HEK293T (cell line): ENCODE measurements at regions of chr6 and their contacts with region 1.

Region 1: DNA sequence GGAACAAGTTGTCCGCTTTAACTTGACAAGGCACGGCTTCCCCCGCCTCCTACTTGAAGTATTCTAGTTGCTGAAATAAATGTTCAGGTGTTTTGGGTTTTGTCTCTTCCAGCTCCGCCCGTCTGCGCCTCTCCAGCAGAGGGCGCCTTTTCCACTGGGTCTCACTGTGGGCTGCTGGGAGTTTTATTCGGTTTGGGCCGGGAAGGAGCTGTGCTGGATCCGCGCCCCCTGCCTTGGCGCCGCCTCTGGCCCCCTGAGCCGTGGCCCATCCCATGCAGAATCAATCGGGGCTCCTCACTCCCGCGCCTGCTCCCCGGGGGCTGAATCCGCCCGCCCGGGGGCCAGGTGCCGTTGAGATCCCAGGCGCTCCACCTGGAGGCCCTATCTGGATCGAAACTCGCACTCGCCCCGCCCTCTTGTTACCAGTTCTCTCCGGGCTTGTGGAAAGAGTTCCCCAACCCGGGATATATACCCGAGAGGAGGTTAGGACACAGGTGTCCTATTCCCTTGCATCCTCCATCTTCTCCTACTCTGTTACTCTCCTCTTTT is 51.0 kb upstream of the TCF21 start:
- DNase-seq: peak; percentile 85

Region 2: GRCh38 chr6:133568970-133569889 is 268.6 kb before region 1 on chr6:
- CTCF ChIA-PET with region 1: interaction called, 14 read pairs
- POLR2A ChIA-PET with region 1: no interaction called
- DNase-seq: peak; percentile 69

Region 3: GRCh38 chr6:133895573-133896343 is 57.9 kb after region 1 on chr6:
- CTCF ChIA-PET with region 1: interaction called, 11 read pairs
- POLR2A ChIA-PET with region 1: no interaction called
- DNase-seq: no peak

Region 4: GRCh38 chr6:133906050-133906449 is 68.2 kb after region 1 on chr6:
- CTCF ChIA-PET with region 1: interaction called, 11 read pairs
- POLR2A ChIA-PET with region 1: no interaction called
- DNase-seq: no peak

Region 5: GRCh38 chr6:133916650-133917151 is 78.8 kb after region 1 on chr6:
- CTCF ChIA-PET with region 1: interaction called, 45 read pairs
- POLR2A ChIA-PET with region 1: interaction called, 4 read pairs
- DNase-seq: peak; percentile 81